Right lobe of liver (tissue), 6 donors: ENCODE measurements at regions of chr22 and their contacts with region 1.

Region 1: GRCh38 chr22:29394931-29395581 is 6.7 kb upstream of the AP1B1 start:
- DNase-seq: peak; percentile 59 to 72 (median 64)
- ATAC-seq: peak; percentile 92 to 95 (median 94)
- H3K4me3 ChIP-seq: no peak overlapping the region
- H3K27ac ChIP-seq: no peak overlapping the region
- H3K4me1 ChIP-seq: no peaks in the 10 kb centered on the region
- H3K27me3 ChIP-seq: no peaks in the 10 kb centered on the region
- CTCF ChIP-seq: peak; percentile 78 to 83 (median 80)
- POLR2A ChIP-seq: no peak

Region 2: DNA sequence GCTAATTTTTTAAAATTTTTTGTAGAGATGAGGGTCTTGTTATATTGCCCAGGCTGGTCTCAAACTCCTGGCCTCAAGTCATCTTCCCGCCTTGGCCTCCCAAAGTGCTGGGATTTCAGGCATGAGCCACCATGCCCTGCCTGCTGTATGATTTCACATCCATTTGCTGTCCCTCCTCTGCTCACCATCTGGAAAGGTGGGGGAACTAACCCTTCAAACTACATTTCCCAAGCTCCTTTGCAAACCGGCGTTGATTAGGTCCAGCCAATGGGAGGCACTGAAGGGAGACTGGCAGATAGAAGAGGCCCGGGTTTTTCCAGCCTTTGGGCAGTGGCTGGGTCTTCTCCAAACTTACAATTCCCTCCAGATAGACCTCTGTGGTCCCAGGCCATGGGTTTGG is 62.7 kb after region 1 on chr22:
- intact Hi-C with region 1: no loop called
- DNase-seq: no peak
- ATAC-seq: peak; percentile 43 to 67 (median 62)
- H3K4me3 ChIP-seq: no peak overlapping the region
- H3K27ac ChIP-seq: no peak overlapping the region
- H3K4me1 ChIP-seq: no peaks in the 10 kb centered on the region
- H3K27me3 ChIP-seq: no peaks in the 10 kb centered on the region
- CTCF ChIP-seq: no peak
- POLR2A ChIP-seq: no peak

Region 3: GRCh38 chr22:29531419-29531818 is 136.4 kb after region 1 on chr22:
- intact Hi-C with region 1: loop called in 1 of 2 experiments (anchors 10 kb)
- DNase-seq: no peak
- ATAC-seq: peak in 1 of 4 donors; percentile 31
- H3K4me3 ChIP-seq: no peak overlapping the region
- H3K27ac ChIP-seq: no peak overlapping the region
- H3K4me1 ChIP-seq: no peaks in the 10 kb centered on the region
- H3K27me3 ChIP-seq: no peaks in the 10 kb centered on the region
- CTCF ChIP-seq: no peak
- POLR2A ChIP-seq: no peak